Psoas muscle (tissue), 8 donors: ENCODE measurements at regions of chr15 and their contacts with region 1.

Region 1: GRCh38 chr15:34209421-34210282 is at the start of gene KATNBL1:
- DNase-seq: peak; percentile 97 to 99
- ATAC-seq: peak; percentile 100
- H3K4me3 ChIP-seq: peak within 1 kb of the TSS; percentile 83
- H3K27ac ChIP-seq: peak within 1 kb of the TSS; percentile 83
- H3K4me1 ChIP-seq: peaks cover 8% of the 10 kb centered on the region
- H3K27me3 ChIP-seq: no peaks in the 10 kb centered on the region
- CTCF ChIP-seq: peak; percentile 90
- total RNA-seq, gene KATNBL1: 12.2 to 19.5 (median 16.4) TPM

Region 2: DNA sequence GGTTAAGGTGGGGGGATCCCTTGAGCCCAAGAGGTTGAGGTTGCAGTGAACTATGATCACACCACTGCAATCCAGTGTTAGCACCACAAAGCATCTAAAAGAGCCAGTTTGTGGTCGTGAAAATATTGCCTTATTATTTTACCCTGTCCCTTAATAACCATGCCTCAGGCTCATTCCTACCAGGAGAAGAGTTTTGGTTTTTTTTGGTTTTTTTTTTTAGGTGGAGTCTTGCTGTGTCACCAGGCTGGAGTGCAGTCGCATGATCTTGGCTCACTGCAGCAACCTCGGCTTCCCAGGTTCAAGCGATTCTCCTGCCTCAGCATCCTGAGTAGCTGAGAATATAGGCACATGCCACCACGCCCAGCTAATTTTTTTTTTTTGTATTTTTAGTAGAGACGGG is 152.7 kb before region 1 on chr15:
- intact Hi-C with region 1: loop called (anchors 1 to 2 kb)
- DNase-seq: no peak
- ATAC-seq: no peak
- H3K4me3 ChIP-seq: no peak overlapping the region
- H3K27ac ChIP-seq: no peak overlapping the region
- H3K4me1 ChIP-seq: no peaks in the 10 kb centered on the region
- H3K27me3 ChIP-seq: no peaks in the 10 kb centered on the region
- CTCF ChIP-seq: no peak

Region 3: DNA sequence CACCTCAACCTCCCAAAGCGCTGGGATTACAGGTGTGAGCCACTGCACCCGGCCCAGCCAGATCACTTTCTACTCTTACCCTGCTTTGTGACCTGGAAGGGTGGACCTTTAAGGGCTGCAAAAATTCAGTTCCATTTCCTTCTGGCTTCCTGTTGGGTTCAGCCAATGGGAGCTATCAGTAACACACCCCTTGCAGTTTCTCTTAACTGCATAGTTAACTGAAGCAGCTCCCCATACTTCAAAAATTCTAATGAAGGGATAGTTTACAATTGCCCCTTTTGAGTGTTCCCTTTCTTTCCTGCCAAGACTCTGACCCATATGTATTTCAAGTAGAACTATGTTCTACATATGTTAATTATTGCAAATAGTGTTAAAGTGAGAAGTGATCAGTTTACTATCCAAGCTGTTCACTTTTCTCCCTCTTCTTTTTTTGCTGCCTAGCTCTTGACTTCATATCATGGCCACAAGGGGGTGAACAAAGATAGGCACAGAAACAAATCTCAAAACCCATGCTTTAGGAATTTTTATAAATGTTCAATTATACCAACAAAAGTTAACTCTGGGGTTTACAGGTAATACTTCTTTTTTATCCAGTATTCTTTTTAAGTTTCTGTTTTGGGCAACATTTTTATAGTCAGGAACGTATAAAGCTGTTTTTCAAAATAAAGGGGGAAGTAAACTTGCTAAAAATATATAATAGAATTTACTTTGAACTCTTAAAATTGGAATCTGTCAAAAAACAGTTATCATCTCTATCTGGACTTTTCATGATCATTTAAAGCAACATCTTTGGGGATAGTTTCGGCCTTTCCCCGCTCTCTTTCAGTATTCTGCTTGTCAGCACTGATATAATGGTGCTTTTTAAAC is 99.6 kb before region 1 on chr15:
- intact Hi-C with region 1: loop called (anchors 2 to 5 kb)
- DNase-seq: no peak
- ATAC-seq: no peak
- H3K4me3 ChIP-seq: no peak overlapping the region
- H3K27ac ChIP-seq: no peak overlapping the region
- H3K4me1 ChIP-seq: no peaks in the 10 kb centered on the region
- H3K27me3 ChIP-seq: no peaks in the 10 kb centered on the region
- CTCF ChIP-seq: peak; percentile 42

Region 4: DNA sequence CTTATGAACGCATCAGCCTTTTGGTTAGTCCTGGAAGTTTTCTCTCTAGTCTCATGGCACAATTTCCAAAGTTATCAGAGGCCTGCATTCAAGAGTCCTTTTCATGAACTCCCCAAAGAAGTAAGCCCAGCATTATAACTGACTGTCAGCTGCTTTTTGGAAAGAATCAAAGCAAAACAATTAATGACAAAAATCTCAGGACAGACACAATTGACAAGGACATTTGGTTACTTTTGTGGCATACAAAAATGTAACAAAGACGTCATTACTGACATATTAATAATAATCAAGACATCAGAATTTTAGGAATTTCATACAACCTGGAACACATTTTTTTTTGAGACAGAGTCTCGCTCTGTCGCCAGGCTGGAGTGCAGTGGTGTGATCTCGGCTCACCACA is 20.9 kb before region 1 on chr15:
- intact Hi-C with region 1: no loop called
- DNase-seq: no peak
- ATAC-seq: no peak
- H3K4me3 ChIP-seq: no peak overlapping the region
- H3K27ac ChIP-seq: no peak overlapping the region
- H3K4me1 ChIP-seq: peaks cover 6% of the 10 kb centered on the region
- H3K27me3 ChIP-seq: no peaks in the 10 kb centered on the region
- CTCF ChIP-seq: no peak